ENCODE measurements at regions of chr19 and their contacts with region 1.

Region 1: DNA sequence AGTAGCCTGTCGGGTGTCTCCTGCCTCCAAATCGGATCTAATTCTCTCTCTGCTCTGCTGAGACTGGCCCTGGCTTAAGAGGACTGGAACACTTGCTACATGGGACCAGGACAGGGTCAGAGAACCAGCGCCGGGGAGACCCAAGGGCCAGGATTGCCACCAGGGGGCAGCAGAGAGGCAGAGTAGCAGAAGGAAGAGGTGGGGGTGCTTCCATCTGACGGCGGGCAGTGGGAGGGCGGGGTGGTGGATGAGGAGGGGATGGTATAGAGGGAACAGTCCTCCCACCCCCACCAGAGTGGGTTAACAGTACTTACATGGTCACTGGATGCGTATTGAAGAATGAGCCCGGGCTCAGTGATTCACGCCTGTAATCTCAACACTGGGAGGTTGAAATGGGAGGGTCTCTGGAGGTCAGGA is 11.9 kb downstream of the SELENOW start:
- DNase-seq: peak; percentile 51 to 85 (median 74)
- ATAC-seq: peak; percentile 85
- H3K4me3 ChIP-seq: no peak overlapping the region
- H3K4me3 Mint-ChIP-seq: no peak overlapping the region
- H3K27ac ChIP-seq: no peak overlapping the region
- H3K27ac Mint-ChIP-seq: peak overlapping the region in 1 of 9 donors; percentile 32
- H3K4me1 ChIP-seq: no peaks in the 10 kb centered on the region
- H3K4me1 Mint-ChIP-seq: peaks cover 1 to 5% (median 4%) of the 10 kb centered on the region in 7 donors
- H3K27me3 ChIP-seq: no peaks in the 10 kb centered on the region
- H3K27me3 Mint-ChIP-seq: peaks cover 0 to under 1% (median 0%) of the 10 kb centered on the region in 5 donors

Region 2: GRCh38 chr19:47608074-47608918 is 182.1 kb before region 1 on chr19:
- CTCF ChIA-PET with region 1: no interaction called
- POLR2A ChIA-PET with region 1: no interaction called
- intact Hi-C with region 1: no loop called
- DNase-seq: peak; percentile 91 to 99 (median 96)
- ATAC-seq: peak; percentile 96
- H3K4me3 ChIP-seq: peak overlapping the region; percentile 79
- H3K4me3 Mint-ChIP-seq: peak overlapping the region; percentile 70 to 95 (median 86)
- H3K27ac ChIP-seq: peak overlapping the region; percentile 96
- H3K27ac Mint-ChIP-seq: peak overlapping the region; percentile 61 to 92 (median 88)
- H3K4me1 ChIP-seq: peaks cover 16 to 22% of the 10 kb centered on the region in 2 donors
- H3K4me1 Mint-ChIP-seq: peaks cover 12 to 36% (median 28%) of the 10 kb centered on the region in 7 donors
- H3K27me3 ChIP-seq: no peaks in the 10 kb centered on the region
- H3K27me3 Mint-ChIP-seq: peaks cover 0 to 2% (median 0%) of the 10 kb centered on the region in 5 donors

Region 3: DNA sequence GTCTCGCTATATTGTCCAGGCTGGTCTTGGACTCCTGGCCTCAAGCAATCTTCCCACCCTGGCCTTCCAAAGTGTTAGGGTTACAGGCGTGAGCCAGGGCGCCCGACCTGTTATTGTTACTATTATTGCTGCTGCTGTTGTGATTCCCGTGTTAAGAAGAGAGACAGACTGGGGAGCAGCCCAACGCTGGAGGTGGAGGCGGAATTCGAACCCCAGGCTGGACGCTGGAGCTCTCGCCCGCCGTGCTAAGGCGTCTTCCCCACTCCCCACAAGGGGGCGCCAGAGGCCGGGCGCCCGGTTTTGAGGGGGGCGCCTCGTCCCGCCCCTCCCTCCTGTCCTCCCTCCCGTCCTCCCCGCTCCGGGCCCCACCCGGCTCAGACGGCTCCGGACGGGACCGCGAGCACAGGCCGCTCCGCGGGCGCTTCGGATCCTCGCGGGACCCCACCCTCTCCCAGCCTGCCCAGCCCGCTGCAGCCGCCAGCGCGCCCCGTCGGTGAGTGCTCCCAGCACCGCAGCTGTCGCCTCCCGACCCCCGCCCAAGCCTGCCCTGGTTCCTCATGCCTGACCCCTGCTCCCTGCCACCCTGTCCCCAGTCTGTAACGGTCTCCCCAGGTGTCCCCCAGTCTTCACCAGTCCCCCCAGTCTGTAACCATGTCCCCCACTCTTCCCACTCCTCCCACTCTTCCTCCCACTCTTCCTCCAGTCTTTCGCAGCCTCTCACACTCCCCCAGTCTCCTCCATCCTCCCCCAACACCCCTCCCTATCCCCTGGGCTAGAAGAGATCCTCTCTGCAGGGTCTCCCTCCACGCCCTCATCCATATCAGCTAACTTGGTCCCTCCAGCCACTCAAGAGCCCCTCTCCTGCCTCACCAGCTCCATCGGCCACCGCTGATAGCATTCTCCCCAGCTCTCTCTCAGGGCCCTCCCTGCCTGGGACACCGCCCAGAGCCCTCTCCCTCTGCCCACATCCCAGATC is 77.1 kb before region 1 on chr19 and contains the start of gene EHD2:
- CTCF ChIA-PET with region 1: interaction called, 9 read pairs
- POLR2A ChIA-PET with region 1: no interaction called
- intact Hi-C with region 1: loop called in 1 of 2 experiments (anchors 5 kb)
- DNase-seq: peak in 6 of 9 donors; percentile 12 to 70 (median 41)
- ATAC-seq: peak; percentile 73
- H3K4me3 ChIP-seq: no peak within 1 kb of the TSS
- H3K4me3 Mint-ChIP-seq: peak within 1 kb of the TSS in 3 of 10 donors; percentile 16 to 57 (median 46)
- H3K27ac ChIP-seq: no peak within 1 kb of the TSS
- H3K27ac Mint-ChIP-seq: peak within 1 kb of the TSS in 1 of 9 donors; percentile 43
- H3K4me1 ChIP-seq: no peaks in the 10 kb centered on the region
- H3K4me1 Mint-ChIP-seq: peaks cover 0 to 11% (median 4%) of the 10 kb centered on the region in 7 donors
- H3K27me3 ChIP-seq: peaks cover 0 to 4% of the 10 kb centered on the region in 2 donors
- H3K27me3 Mint-ChIP-seq: peaks cover 32 to 60% (median 44%) of the 10 kb centered on the region in 5 donors
- total RNA-seq, gene EHD2: 0.15 to 0.37 (median 0.19) TPM in 3 of 5 experiments, not detected in the others

Region 4: DNA sequence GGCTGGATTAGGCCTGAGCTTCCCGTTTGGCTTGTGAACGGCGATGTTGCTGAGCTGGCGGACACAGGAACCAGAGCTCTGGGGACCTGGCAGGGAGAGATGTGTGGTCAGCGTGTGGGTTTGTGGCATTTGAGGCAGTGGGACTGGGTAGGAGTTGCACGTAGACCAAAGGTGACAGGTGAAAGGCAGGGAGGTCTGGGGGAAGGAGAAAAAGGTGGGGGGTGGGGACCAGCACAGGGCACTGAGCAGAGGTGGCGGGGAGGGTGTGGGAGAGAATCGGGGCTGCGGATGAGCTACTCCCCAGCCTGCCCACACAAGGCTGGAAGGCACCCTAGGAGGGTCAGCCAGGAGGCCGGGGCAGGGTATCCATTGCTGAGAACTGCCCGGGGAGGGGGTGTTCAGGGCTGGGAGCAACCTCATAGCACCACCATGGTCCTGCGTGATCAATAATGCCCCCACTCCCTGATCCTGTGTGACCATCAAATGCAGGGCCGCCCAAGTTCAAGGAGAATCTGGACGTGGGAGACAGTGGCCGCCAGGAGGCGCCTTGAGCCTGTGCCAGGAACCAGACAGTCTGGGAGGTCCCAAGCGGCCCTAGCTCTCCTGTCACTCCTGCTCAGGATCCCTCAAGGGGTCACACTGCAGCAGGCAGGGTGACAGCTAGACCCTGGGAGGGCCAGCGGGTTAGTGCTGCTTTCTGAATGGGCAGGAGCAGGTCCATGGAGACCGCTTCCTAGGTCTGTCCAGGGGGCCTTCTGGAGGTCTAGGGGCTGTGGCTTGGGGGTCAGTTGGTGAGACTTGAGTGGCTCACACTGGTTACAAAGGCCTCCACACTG is 24.7 kb before region 1 on chr19:
- CTCF ChIA-PET with region 1: interaction called, 4 read pairs
- POLR2A ChIA-PET with region 1: no interaction called
- intact Hi-C with region 1: loop called (anchors 1 kb)
- DNase-seq: no peak
- ATAC-seq: peak; percentile 66
- H3K4me3 ChIP-seq: no peak overlapping the region
- H3K4me3 Mint-ChIP-seq: no peak overlapping the region
- H3K27ac ChIP-seq: no peak overlapping the region
- H3K27ac Mint-ChIP-seq: peak overlapping the region in 2 of 9 donors; percentile 23 to 74
- H3K4me1 ChIP-seq: no peaks in the 10 kb centered on the region
- H3K4me1 Mint-ChIP-seq: peaks cover 0 to 19% (median 7%) of the 10 kb centered on the region in 7 donors
- H3K27me3 ChIP-seq: no peaks in the 10 kb centered on the region
- H3K27me3 Mint-ChIP-seq: peaks cover 0 to 5% (median 0%) of the 10 kb centered on the region in 5 donors

Region 5: DNA sequence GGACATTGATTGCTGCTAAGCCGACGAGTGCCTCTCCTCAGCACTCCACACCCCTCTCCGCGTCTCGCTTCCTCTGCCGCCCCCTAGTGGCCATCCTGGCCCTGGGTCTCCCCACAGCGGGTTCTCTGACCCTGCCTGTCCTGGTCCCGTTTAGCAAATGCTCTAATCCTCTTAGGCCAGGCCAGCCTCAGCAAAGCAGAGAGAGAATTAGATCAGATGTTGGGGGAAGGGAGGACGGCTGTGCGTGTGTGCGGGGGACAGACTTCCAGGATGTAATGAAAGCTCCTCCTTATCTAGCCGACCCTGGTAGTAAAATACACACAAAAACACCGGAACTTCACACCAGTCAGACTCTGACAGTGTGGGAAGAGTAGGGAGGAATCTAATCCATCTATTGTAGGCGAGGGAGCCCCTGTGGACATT is 73.1 kb after region 1 on chr19:
- CTCF ChIA-PET with region 1: interaction called, 3 read pairs
- POLR2A ChIA-PET with region 1: no interaction called
- intact Hi-C with region 1: loop called in 1 of 2 experiments (anchors 2 kb)
- DNase-seq: peak; percentile 50 to 87 (median 78)
- ATAC-seq: peak; percentile 91
- H3K4me3 ChIP-seq: no peak overlapping the region
- H3K4me3 Mint-ChIP-seq: no peak overlapping the region
- H3K27ac ChIP-seq: no peak overlapping the region
- H3K27ac Mint-ChIP-seq: peak overlapping the region in 1 of 9 donors; percentile 54
- H3K4me1 ChIP-seq: no peaks in the 10 kb centered on the region
- H3K4me1 Mint-ChIP-seq: no peaks in the 10 kb centered on the region
- H3K27me3 ChIP-seq: no peaks in the 10 kb centered on the region
- H3K27me3 Mint-ChIP-seq: peaks cover 7 to 28% (median 13%) of the 10 kb centered on the region in 5 donors